ENCODE measurements at regions of chr13 and their contacts with region 1.

Region 1: DNA sequence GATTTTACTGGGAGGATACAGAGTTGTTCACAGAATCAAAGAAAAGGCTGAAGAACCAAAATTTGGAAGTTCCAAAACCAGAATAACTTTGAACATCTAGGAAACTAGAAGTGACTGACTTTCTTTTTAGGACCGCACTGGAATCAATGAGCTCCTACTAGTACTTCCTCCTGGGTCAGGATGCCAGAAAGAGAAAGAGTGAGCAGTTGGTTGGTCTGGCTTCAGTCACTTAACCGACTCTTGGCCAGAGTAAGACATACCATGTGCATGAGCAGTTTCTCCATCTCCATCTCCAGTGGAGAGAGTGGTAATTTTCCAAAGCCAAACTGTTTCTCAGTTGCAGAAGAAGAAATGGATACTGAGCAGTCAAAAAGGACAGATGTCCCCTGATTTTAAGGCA is 27.1 kb upstream of the MTUS2 start:
- DNase-seq: no peak
- ATAC-seq: peak in 2 of 8 donors; percentile 43 to 62
- H3K4me3 ChIP-seq: no peak overlapping the region
- H3K27ac ChIP-seq: no peak overlapping the region
- H3K4me1 ChIP-seq: peaks cover 0 to 8% (median 0%) of the 10 kb centered on the region in 9 donors
- H3K27me3 ChIP-seq: peaks cover 0 to 50% (median 13%) of the 10 kb centered on the region in 7 donors
- CTCF ChIP-seq: no peak

Region 2: DNA sequence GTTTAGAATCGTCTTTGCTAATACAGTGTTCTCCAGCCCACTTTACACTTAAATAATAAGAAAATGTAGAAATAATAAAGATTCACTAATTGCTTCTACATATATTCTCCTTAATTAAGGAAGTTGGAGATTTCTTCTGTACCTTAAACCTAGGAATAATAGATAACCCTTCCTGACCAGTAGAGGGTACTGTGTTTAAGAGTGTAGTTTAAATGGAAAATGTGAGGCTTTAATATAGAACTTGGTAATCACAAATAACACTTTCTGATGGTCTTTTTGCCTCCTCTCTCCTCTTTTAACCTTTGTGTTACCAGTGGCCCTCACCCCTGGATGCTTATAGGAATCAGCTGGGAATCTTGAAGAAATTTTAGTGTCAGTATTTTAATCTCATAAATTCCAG is 113.4 kb before region 1 on chr13:
- intact Hi-C with region 1: loop called in 9 of 10 experiments (anchors 2 to 10 kb)
- DNase-seq: no peak
- ATAC-seq: peak in 1 of 8 donors; percentile 44
- H3K4me3 ChIP-seq: no peak overlapping the region
- H3K27ac ChIP-seq: no peak overlapping the region
- H3K4me1 ChIP-seq: no peaks in the 10 kb centered on the region
- H3K27me3 ChIP-seq: no peaks in the 10 kb centered on the region
- CTCF ChIP-seq: peak in 7 of 9 donors; percentile 11 to 57 (median 40)

Region 3: DNA sequence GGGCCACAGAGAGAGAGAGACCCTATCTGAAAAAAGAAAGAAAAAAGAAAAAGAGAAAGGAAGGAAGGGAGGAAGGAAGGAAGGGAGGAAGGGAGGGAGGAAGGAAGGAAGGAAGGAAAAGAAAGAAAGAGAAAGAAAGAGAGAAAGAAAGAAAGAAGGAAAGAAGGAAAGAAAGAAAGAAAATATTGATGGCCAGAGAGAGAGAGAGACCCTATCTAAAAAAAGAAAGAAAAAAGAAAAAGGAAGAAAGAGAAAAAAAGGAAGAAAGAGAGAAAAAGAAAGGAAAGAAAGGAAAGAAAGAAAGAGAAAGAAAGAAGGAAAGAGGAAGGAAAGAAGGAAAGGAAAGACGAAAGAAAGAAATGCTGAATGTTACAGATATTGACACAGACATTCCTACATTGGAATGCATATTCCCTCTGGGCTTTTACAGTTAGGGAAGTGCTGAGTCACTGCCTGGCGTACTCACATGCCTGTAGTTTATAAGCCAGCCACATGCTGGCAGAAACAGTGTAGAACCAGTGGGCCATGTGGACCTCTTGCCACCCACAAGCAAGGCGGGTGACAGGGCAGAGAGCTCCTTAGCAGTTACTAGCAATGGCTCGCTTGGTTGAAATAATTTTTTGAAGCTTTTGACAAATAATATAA is 39.6 kb before region 1 on chr13:
- intact Hi-C with region 1: loop called in 4 of 10 experiments (anchors 5 kb)
- DNase-seq: peak; percentile 21 to 54
- ATAC-seq: peak; percentile 60 to 86 (median 72)
- H3K4me3 ChIP-seq: no peak overlapping the region
- H3K27ac ChIP-seq: peak overlapping the region in 9 of 10 donors; percentile 74 to 89 (median 83)
- H3K4me1 ChIP-seq: peaks cover 0 to 52% (median 24%) of the 10 kb centered on the region in 9 donors
- H3K27me3 ChIP-seq: no peaks in the 10 kb centered on the region
- CTCF ChIP-seq: peak in 1 of 9 donors; percentile 14